ENCODE measurements at regions of chr3 and their contacts with region 1.

Region 1: DNA sequence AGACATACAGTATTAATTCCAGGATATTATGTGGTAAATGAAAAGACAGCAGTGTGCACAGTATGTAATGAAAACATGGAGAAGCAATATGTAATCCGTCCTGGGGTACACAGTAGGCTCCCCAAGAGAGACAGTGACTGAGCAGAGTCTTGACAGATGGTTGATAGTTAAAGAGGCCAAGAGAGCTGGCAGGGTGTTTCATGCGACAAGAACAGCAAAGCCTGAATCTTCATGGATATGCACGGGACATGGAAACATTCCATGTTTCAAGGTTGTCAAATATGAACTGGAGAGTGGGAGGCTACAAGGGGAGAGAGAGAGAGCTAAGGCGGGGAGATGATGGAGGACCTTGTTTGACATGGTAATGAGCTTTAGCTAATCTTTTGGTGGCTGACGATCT is 338.4 kb downstream of the IL5RA start:
- DNase-seq: no peak
- H3K4me3 ChIP-seq: no peak overlapping the region
- H3K27ac ChIP-seq: no peak overlapping the region
- H3K4me1 ChIP-seq: no peaks in the 10 kb centered on the region
- H3K27me3 ChIP-seq: no peaks in the 10 kb centered on the region
- CTCF ChIP-seq: no peak
- POLR2A ChIP-seq: no peak

Region 2: GRCh38 chr3:2656806-2657777 is 114.6 kb before region 1 on chr3:
- intact Hi-C with region 1: loop called (anchors 2 kb)
- DNase-seq: no peak
- H3K4me3 ChIP-seq: no peak overlapping the region
- H3K27ac ChIP-seq: no peak overlapping the region
- H3K4me1 ChIP-seq: no peaks in the 10 kb centered on the region
- H3K27me3 ChIP-seq: no peaks in the 10 kb centered on the region
- CTCF ChIP-seq: no peak
- POLR2A ChIP-seq: no peak

Measured in breast epithelium (tissue), 4 donors.